ENCODE measurements at regions of chr12 and their contacts with region 1.

Region 1: GRCh38 chr12:96219698-96220206 is 25.6 kb downstream of the ELK3 start:
- DNase-seq: peak in 3 of 4 donors; percentile 59 to 90 (median 89)
- ATAC-seq: peak; percentile 94
- H3K4me3 ChIP-seq: no peak overlapping the region
- H3K27ac ChIP-seq: peak overlapping the region; percentile 74 to 81
- H3K4me1 ChIP-seq: peaks cover 0 to 38% of the 10 kb centered on the region in 2 donors
- H3K27me3 ChIP-seq: no peaks in the 10 kb centered on the region
- CTCF ChIP-seq: no peak

Region 2: GRCh38 chr12:95976416-95976832 is 243.3 kb before region 1 on chr12:
- intact Hi-C with region 1: no loop called
- DNase-seq: no peak
- ATAC-seq: no peak
- H3K4me3 ChIP-seq: no peak overlapping the region
- H3K27ac ChIP-seq: no peak overlapping the region
- H3K4me1 ChIP-seq: no peaks in the 10 kb centered on the region
- H3K27me3 ChIP-seq: no peaks in the 10 kb centered on the region
- CTCF ChIP-seq: no peak

Region 3: GRCh38 chr12:96516472-96517430 is 297.0 kb after region 1 on chr12:
- intact Hi-C with region 1: loop called in 1 of 2 experiments (anchors 10 kb)
- DNase-seq: peak in 3 of 4 donors; percentile 61 to 84 (median 72)
- ATAC-seq: peak; percentile 92
- H3K4me3 ChIP-seq: no peak overlapping the region
- H3K27ac ChIP-seq: no peak overlapping the region
- H3K4me1 ChIP-seq: peaks cover 0 to 11% of the 10 kb centered on the region in 2 donors
- H3K27me3 ChIP-seq: no peaks in the 10 kb centered on the region
- CTCF ChIP-seq: peak; percentile 64 to 70

Measured in left lung (tissue), 14 donors.